GM10248 (cell line): ENCODE measurements at regions of chr16 and their contacts with region 1.

Region 1: GRCh38 chr16:67017810-67018488 is 11.0 kb upstream of the CBFB start:
- DNase-seq: peak; percentile 83
- CTCF ChIP-seq: peak; percentile 86

Region 2: DNA sequence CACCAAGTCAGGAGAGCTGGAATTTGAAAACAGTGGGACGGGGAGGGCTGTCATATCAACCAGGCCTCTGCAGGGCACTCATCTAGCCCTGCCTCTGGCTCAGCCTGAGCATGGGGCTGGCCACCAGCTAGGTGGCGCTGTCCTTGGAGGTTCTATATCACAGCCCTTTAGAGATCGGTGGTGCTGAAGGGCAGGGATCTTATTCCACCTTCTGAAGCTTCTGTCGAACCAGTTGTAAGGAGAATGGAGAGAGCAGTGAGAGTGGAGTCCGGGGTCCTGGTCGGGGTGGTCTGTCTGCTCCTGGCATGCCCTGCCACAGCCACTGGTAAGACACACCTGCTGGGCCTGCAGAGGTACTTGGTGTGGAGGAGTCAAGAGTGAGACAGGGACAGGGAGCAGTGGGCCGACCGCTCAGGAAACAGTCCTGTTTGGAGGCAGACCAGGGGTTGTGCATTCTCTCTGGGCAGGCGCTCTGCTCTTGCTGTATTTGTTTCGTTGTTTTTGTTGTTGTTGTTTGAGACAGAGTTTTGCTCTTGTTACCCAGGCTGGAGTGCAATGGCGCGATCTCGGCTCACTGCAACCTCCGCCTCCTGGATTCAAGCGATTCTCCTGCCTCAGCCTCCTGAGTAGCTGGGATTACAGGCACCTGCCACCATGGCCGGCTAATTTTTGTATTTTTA is 56.7 kb before region 1 on chr16 and contains the start of gene CES3:
- CTCF ChIA-PET with region 1: interaction called, 32 read pairs
- POLR2A ChIA-PET with region 1: no interaction called
- DNase-seq: peak; percentile 73
- CTCF ChIP-seq: peak; percentile 86

Region 3: DNA sequence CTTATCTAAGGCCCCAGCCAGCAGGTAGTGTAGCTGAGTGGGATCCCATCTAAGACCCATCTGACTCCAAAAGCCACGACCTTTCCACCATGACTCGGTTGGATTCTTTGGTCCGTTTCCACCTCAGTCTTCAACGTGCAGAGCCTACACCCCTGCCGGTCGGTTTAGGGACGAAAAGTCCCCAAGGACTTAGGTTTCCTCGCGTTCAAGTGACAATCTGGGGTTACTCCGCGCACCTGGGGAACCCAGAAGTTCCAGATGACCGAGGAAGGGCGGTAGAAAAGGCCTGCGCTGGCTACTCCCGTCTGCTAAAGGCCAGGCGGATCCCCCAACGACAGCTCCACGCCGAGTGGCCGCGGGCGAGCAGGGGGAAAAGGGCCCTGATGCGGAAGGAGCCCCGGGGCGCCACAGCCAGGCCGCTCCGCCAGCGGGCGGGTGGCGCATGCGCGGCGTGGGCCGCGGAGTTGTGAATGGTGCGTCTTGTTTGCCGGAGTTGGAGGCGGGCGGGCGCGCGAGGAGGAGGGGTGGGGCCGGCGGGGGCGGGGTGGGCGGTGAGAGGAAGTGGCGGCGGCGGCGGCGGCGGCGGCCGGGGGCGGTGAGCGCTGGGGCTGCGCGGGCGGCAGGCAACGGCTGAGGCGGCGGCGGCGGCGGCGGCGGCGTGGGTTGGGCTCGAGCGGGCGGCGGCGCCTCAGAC is 10.8 kb after region 1 on chr16 and contains the start of gene CBFB:
- CTCF ChIA-PET with region 1: interaction called, 59 read pairs
- POLR2A ChIA-PET with region 1: no interaction called
- DNase-seq: peak; percentile 98
- CTCF ChIP-seq: no peak

Region 4: DNA sequence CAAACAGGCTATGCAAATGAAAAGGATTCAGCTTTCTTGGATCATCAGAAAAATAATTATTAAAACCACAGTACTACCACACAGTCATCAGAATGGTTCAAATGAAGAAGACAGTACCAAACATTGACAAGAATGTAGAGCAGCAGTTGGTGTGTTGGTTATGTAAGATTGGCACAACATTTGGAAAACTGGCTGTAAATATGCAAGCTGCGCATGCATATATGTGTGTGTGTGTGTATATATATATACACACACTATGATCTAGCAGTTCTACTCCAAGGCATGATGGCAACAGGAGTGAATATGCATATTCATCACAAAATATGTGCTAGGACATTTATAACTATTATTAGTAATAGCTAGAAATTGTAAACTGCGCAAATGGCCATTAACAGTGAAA is 57.4 kb after region 1 on chr16:
- CTCF ChIA-PET with region 1: interaction called, 12 read pairs
- POLR2A ChIA-PET with region 1: no interaction called
- DNase-seq: no peak
- CTCF ChIP-seq: no peak

Region 5: DNA sequence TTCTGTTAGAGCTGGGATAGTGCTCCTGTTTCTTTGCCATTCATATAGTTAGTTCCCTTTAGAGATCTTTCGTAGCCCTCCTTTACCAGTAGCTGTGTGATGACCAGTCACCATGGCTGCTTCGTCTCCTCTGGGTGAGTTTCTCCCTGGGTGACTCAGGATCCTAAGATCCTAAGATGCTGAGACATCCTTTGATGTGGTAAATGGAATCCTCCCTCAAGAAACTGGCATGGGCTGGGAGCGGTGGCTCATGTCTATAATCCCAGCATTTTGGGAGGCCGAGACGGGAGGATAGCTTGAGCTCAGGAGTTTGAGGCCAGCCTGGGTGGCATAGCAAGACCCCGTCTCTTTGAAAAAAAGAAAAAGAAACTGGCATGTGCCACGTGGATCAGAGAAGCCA is 97.7 kb after region 1 on chr16:
- CTCF ChIA-PET with region 1: interaction called, 10 read pairs
- POLR2A ChIA-PET with region 1: no interaction called
- DNase-seq: no peak
- CTCF ChIP-seq: no peak

Region 6: GRCh38 chr16:67173808-67174705 is 156.1 kb after region 1 on chr16:
- CTCF ChIA-PET with region 1: interaction called, 34 read pairs
- POLR2A ChIA-PET with region 1: no interaction called
- DNase-seq: peak; percentile 77
- CTCF ChIP-seq: no peak